Breast epithelium (tissue), 4 donors: ENCODE measurements at regions of chr5 and their contacts with region 1.

Region 1: DNA sequence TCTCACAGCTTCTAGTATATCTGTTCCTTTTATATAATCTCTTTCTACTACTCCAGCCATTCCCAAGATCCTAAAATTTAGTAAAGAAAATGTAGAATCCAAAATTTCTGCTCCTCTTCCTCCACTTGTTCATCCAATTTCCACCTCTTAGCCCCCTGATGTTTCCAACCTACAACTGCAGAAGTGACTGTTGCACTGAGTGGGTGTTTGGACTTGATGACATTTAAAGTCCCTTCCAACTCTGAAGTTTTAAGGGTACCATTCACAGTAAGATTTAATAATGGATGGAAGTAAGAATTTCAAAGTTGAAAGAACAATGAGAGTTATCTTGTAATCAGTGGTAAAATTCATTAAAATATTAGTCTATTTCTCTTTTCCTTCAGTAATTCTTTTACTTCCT is 5.5 kb downstream of the DIAPH1 start:
- DNase-seq: no peak
- H3K4me3 ChIP-seq: no peak overlapping the region
- H3K27ac ChIP-seq: no peak overlapping the region
- H3K4me1 ChIP-seq: no peaks in the 10 kb centered on the region
- H3K27me3 ChIP-seq: no peaks in the 10 kb centered on the region
- CTCF ChIP-seq: no peak
- POLR2A ChIP-seq: no peak

Region 2: GRCh38 chr5:141570655-141571054 is 42.7 kb before region 1 on chr5:
- intact Hi-C with region 1: no loop called
- DNase-seq: no peak
- H3K4me3 ChIP-seq: no peak overlapping the region
- H3K27ac ChIP-seq: no peak overlapping the region
- H3K4me1 ChIP-seq: no peaks in the 10 kb centered on the region
- H3K27me3 ChIP-seq: no peaks in the 10 kb centered on the region
- CTCF ChIP-seq: no peak
- POLR2A ChIP-seq: no peak

Region 3: DNA sequence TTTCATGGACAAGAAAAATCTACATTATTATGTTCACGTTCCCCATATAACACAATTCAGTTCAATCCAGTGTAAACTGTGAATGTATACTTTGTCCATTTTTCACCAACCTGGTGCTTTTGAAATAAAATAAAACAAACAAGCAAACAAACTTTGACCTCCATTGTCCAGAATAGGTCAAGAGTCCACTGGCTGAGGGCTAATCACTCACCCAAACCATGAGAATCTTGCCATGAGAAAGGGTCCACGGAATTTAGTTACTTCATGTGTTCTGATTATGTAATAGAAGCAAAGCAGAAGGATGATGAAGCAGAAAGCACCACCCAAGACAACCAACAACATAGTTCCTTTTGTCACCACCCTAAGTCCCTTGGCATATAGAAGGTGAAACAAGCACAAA is 23.2 kb before region 1 on chr5:
- intact Hi-C with region 1: loop called (anchors 2 kb)
- DNase-seq: no peak
- H3K4me3 ChIP-seq: no peak overlapping the region
- H3K27ac ChIP-seq: no peak overlapping the region
- H3K4me1 ChIP-seq: no peaks in the 10 kb centered on the region
- H3K27me3 ChIP-seq: no peaks in the 10 kb centered on the region
- CTCF ChIP-seq: no peak
- POLR2A ChIP-seq: no peak

Region 4: GRCh38 chr5:141657937-141658545 is 44.7 kb after region 1 on chr5:
- intact Hi-C with region 1: no loop called
- DNase-seq: no peak
- H3K4me3 ChIP-seq: no peak overlapping the region
- H3K27ac ChIP-seq: no peak overlapping the region
- H3K4me1 ChIP-seq: no peaks in the 10 kb centered on the region
- H3K27me3 ChIP-seq: no peaks in the 10 kb centered on the region
- CTCF ChIP-seq: no peak
- POLR2A ChIP-seq: no peak